Dorsolateral prefrontal cortex (tissue), 120 donors: ENCODE measurements at regions of chr17 and their contacts with region 1.

Region 1: GRCh38 chr17:64129764-64130558 is at the start of gene ERN1:
- DNase-seq: peak; percentile 85 to 96 (median 94)
- H3K4me3 ChIP-seq: peak within 1 kb of the TSS; percentile 55 to 94 (median 79)
- H3K27ac ChIP-seq: peak within 1 kb of the TSS in 57 of 59 donors; percentile 0 to 92 (median 85)
- H3K27me3 ChIP-seq: no peaks in the 10 kb centered on the region
- CTCF ChIP-seq: peak in 33 of 56 donors; percentile 4 to 52 (median 18)
- total RNA-seq, gene ERN1: 5.1 to 20.0 (median 9.3) TPM

Region 2: DNA sequence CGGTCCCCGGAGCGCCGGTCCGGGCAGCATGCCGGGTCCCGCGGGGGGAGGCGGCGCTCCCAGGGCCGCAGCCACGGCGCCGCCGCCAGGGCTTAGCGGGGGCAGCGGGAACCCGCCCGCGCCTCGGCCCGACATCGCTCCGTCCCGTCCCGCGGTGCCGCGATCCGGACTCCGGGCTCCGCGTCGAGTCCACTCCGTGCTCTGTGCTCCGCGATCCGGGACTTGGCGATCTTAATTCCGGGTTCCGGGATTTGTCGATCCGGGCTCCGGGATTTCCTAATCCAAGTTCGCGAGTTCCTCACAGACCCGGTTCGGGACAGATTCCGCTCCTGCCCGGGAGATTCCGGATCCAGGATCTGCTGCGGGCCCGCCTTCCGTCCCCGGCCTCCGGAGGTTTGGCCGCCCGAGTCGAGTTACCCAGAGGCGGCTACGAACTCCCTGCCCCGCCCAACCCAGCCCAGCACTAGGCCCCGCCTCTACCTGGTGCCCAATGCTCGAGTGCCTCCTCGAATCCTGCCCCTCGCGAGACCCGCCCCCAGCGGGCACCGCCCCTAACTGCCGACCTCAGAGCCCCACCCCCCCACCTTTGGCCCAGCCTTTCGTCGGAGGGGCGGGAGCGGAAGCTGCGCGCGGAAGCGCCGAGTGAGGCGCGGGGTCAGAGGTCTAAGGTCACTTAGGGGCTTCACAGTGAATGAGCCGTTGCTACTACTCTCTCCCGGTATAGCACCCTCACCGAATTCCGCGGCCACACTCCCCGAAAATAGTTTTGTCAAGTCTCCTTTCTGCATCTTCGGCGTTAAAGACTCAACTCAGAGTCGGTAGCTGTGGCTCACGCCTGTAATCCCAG is 287.2 kb before region 1 on chr17 and contains the start of gene SMARCD2:
- intact Hi-C with region 1: loop called in 1 of 2 experiments (anchors 10 kb)
- DNase-seq: peak; percentile 94 to 99 (median 97)
- H3K4me3 ChIP-seq: peak within 1 kb of the TSS; percentile 61 to 98 (median 88)
- H3K27ac ChIP-seq: peak within 1 kb of the TSS; percentile 51 to 100 (median 98)
- H3K27me3 ChIP-seq: no peaks in the 10 kb centered on the region
- CTCF ChIP-seq: peak in 26 of 56 donors; percentile 7 to 52 (median 18)
- total RNA-seq, gene SMARCD2: 20.4 to 70.8 (median 40.0) TPM

Region 3: GRCh38 chr17:63919311-63919723 is 210.6 kb before region 1 on chr17:
- intact Hi-C with region 1: loop called in 1 of 2 experiments (anchors 5 kb)
- DNase-seq: peak in 4 of 10 donors; percentile 32 to 57 (median 42)
- H3K4me3 ChIP-seq: no peak overlapping the region
- H3K27ac ChIP-seq: no peak overlapping the region
- H3K27me3 ChIP-seq: no peaks in the 10 kb centered on the region
- CTCF ChIP-seq: peak; percentile 70 to 95 (median 87)

Region 4: GRCh38 chr17:64025732-64026294 is 104.1 kb before region 1 on chr17:
- intact Hi-C with region 1: loop called (anchors 2 kb)
- DNase-seq: peak in 3 of 10 donors; percentile 33 to 48 (median 40)
- H3K4me3 ChIP-seq: peak overlapping the region in 21 of 59 donors; percentile 5 to 45 (median 26)
- H3K27ac ChIP-seq: peak overlapping the region in 1 of 59 donors; percentile 44
- H3K27me3 ChIP-seq: peaks cover 0 to 6% (median 0%) of the 10 kb centered on the region in 45 donors
- CTCF ChIP-seq: peak; percentile 61 to 94 (median 80)

Region 5: GRCh38 chr17:64145757-64146417 is 15.9 kb after region 1 on chr17:
- intact Hi-C with region 1: loop called in 1 of 2 experiments (anchors 2 kb)
- DNase-seq: peak; percentile 97 to 100 (median 99)
- H3K4me3 ChIP-seq: peak overlapping the region; percentile 52 to 98 (median 91)
- H3K27ac ChIP-seq: peak overlapping the region; percentile 86 to 99 (median 96)
- H3K27me3 ChIP-seq: no peaks in the 10 kb centered on the region
- CTCF ChIP-seq: peak in 42 of 56 donors; percentile 0 to 64 (median 34)

Region 6: DNA sequence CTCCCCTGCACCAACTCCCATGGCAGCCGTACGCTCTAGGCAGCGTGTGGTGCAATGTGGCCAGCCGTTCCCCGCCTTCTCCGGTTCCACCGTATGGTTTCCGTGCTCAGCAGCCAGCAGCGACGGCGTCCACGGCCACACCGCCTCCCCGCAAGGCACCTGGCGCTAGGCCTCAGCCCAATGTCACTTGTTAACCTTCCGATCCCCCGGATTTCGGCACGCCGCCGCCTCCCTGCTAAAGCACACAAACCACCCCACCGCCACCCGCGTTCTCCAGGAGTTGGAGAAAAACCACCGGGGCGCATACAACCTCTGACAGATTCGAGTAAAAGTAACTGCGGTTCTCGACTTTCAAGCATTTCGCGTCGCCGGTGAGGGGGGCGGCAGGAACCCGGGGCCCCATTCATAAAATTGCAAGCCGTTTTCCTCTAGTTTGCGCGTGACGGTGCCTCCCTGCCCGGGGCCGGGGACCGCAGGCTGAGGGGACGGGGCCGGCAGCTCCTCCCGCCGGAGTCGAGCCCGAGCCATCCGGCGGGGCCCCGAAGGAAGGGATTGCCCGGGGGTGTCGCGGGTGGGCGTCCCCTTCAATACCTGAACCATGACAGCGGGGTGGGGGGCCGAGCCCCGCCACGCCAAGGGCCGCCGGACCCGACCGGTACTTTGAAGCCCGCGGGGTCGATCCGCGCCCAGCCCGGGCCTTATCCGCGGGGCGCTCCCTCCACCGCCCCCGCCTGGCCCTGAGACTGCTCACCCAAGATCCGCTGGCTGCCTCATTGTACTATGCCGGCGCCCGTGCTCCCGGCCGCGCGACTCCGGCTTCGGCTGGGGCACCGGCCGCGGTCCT is 132.7 kb after region 1 on chr17 and contains the start of gene TEX2:
- intact Hi-C with region 1: loop called in 1 of 2 experiments (anchors 5 kb)
- DNase-seq: peak; percentile 27 to 63 (median 44)
- H3K4me3 ChIP-seq: peak within 1 kb of the TSS; percentile 68 to 99 (median 92)
- H3K27ac ChIP-seq: peak within 1 kb of the TSS in 57 of 59 donors; percentile 18 to 95 (median 85)
- H3K27me3 ChIP-seq: no peaks in the 10 kb centered on the region
- CTCF ChIP-seq: no peak
- total RNA-seq, gene TEX2: 59.9 to 107 (median 79.7) TPM

Region 7: DNA sequence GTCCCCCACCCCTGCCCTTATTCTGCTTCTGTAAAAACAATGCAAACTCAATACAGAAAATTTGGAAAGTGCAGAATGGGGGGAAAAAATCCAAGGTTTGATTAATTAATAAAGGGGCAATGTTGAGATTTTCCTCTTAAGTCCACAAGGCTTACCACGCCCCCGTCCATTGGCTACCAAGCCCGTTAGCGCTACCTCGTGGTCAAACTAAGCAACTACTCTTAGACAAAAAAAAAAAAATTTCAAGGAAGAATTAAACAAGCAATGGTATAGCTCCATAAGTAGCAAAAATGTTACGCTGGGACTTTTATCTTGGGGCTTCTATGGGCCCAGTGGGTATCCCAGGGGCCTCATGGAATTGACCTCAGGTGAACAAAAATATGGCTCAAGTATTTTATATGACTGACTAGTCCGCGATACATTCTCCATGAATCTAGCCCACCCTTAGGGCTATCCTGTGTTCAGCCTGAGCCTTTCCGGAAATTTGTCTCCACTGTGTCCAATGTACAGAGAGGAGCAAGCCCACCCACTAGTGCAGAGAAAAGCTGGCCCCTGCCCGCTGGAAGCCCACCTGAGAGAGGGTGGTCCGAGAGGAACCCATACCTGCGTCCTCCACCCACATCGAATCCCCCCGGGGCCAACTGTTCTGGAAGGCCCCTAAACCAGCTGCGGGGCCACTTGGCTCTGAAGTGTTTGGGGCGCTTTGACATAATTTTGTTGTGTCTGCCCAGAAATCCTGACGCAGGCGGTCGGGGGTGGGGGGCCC is 152.2 kb after region 1 on chr17:
- intact Hi-C with region 1: no loop called
- DNase-seq: peak in 7 of 10 donors; percentile 30 to 55 (median 46)
- H3K4me3 ChIP-seq: no peak overlapping the region
- H3K27ac ChIP-seq: peak overlapping the region in 2 of 59 donors; percentile 18 to 61
- H3K27me3 ChIP-seq: no peaks in the 10 kb centered on the region
- CTCF ChIP-seq: peak; percentile 64 to 94 (median 85)